Psoas muscle (tissue), 8 donors: ENCODE measurements at regions of chr11 and their contacts with region 1.

Region 1: DNA sequence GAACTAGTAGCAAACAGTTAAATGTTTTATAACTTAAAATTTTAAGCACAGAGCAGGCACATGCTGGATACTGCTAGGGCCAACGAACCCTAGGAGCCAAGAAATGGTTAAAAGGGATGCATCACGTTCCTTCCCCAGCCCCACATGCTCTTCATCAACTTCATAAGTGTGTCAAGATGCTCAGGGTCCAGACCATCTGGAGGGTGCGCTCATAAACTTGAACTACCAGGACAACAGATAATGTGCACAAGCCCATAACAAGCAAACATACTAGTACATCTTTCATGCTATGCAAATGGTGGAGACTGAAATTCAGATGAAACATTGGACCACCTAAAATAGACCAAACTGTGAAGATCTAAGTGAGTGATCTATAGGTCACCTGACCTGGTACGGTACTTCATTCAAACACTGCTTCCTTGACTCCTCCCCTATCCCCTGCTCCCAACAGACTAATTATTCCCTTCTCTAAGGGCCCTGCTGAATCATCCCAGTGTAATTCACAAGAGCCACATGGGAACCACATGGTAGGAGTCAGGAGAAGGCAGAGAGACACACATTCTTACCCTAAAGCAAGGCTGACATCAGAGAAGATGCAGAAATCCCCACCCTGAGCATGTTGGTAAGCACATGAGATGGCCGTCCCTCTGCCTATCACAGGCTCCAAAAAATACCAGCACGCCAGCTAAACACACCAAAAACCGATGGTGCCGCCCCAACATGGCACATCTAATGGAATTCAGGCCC is 83.9 kb downstream of the ETS1 start:
- DNase-seq: no peak
- ATAC-seq: no peak
- H3K4me3 ChIP-seq: no peak overlapping the region
- H3K27ac ChIP-seq: peak overlapping the region; percentile 80
- H3K4me1 ChIP-seq: peaks cover 93% of the 10 kb centered on the region
- H3K27me3 ChIP-seq: no peaks in the 10 kb centered on the region
- CTCF ChIP-seq: no peak

Region 2: DNA sequence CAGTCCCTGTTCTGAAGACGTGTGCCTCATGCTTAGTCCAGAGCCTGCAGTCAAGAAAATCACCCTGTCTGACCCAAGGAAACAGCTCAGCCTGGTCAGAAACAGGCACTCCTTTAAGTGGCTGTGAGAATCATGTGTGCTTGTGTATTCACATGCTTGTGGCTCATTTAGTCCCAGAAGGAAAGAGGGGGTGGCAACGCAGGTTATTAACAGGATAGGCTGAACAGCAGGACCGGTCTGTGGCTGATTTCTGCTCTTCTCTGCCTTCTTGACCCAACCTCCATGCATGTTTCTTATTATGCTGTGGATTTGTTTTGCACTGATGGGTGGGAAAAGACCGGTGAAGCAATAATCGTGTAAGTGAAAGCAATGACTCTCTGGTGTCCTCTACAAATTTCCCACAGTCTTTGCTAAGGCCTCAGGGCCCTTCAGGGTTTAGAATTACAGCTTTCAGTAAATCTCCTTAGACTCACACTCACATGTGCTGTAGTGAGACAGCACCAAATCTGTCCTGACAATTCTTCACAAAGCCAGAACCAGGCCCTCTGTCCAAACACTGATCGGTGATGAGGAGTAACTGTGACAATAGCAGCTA is 204.2 kb before region 1 on chr11:
- intact Hi-C with region 1: loop called in 1 of 2 experiments (anchors 5 kb)
- DNase-seq: no peak
- ATAC-seq: peak in 2 of 4 donors; percentile 36 to 65
- H3K4me3 ChIP-seq: no peak overlapping the region
- H3K27ac ChIP-seq: peak overlapping the region; percentile 43
- H3K4me1 ChIP-seq: no peaks in the 10 kb centered on the region
- H3K27me3 ChIP-seq: no peaks in the 10 kb centered on the region
- CTCF ChIP-seq: no peak